ENCODE measurements at regions of chr21 and their contacts with region 1.

Region 1: DNA sequence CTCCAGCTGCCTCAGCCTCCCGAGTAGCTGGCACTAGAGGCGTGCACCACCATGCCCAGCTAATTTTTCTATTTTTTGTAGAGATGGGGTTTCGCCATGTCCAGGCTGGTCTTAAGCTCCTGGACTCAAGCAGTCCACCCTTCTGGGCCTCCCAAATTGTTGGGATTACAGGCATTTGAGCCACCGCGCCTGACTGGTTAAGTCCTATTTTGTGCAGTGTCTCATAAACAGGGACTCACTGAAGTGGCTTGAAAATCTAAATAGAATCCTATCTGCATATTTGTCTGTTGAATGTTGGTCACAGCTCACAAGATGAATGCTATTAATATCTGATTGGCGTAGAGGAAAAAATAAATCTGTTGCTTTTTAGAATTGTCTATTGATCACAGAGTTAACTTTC is 5.9 kb upstream of the CHAF1B start:
- DNase-seq: no peak
- ATAC-seq: no peak
- H3K4me3 ChIP-seq: no peak overlapping the region
- H3K27ac ChIP-seq: peak overlapping the region; percentile 76
- H3K4me1 ChIP-seq: peaks cover 30% of the 10 kb centered on the region
- H3K27me3 ChIP-seq: no peaks in the 10 kb centered on the region
- CTCF ChIP-seq: no peak

Region 2: GRCh38 chr21:36337099-36337509 is 42.1 kb before region 1 on chr21:
- intact Hi-C with region 1: loop called in 1 of 2 experiments (anchors 5 kb)
- DNase-seq: no peak
- ATAC-seq: peak; percentile 56 to 76 (median 72)
- H3K4me3 ChIP-seq: no peak overlapping the region
- H3K27ac ChIP-seq: peak overlapping the region; percentile 54
- H3K4me1 ChIP-seq: peaks cover 4% of the 10 kb centered on the region
- H3K27me3 ChIP-seq: no peaks in the 10 kb centered on the region
- CTCF ChIP-seq: no peak

Region 3: DNA sequence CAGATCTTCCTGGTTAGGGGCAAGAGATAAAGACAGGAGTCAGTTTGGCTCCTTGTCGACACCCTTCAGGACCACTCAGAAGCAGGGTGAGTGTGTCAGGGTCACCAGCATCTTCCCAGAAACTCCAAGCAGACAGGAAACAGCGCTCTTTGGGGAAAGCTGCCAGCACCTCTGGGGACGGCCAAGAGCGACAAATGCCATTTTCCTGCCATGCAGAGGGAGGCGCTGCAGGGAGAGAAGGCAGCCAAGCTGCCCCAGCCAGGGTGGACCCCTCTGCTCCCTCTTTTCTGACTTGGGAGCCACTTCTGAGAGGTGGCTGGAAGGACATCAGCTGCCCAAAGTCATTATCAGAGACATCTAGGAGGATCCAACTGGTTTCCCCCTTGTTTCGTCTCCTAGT is 348.6 kb after region 1 on chr21:
- intact Hi-C with region 1: no loop called
- DNase-seq: no peak
- ATAC-seq: no peak
- H3K4me3 ChIP-seq: no peak overlapping the region
- H3K27ac ChIP-seq: no peak overlapping the region
- H3K4me1 ChIP-seq: no peaks in the 10 kb centered on the region
- H3K27me3 ChIP-seq: peaks cover 0 to 44% (median 4%) of the 10 kb centered on the region in 3 donors
- CTCF ChIP-seq: no peak